Vagina (tissue), 2 donors: ENCODE measurements at regions of chr6 and their contacts with region 1.

Region 1: DNA sequence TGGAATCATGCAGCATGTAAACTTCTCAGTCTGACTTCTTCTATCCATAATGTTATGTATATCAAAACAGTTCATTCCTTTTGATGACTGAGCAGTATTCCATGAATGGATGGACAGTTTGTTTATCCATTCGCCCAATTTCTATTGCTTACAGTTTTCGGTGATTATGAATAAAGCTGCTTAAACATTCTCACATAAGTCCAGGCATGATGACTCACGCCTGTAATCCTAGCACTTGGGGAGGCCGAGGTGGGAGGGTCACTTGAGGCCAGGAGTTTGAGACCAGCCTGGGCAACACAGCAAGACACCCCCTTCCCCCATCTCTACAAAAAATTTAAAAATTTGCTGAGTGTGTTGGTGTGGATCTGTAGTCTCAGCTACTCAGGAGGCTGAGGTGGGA is 22.9 kb upstream of the HMGA1 start:
- DNase-seq: no peak
- H3K4me3 ChIP-seq: no peak overlapping the region
- H3K27ac ChIP-seq: no peak overlapping the region
- H3K4me1 ChIP-seq: no peaks in the 10 kb centered on the region
- H3K27me3 ChIP-seq: no peaks in the 10 kb centered on the region
- CTCF ChIP-seq: no peak
- POLR2A ChIP-seq: no peak

Region 2: GRCh38 chr6:34004706-34005105 is 209.1 kb before region 1 on chr6:
- intact Hi-C with region 1: no loop called
- DNase-seq: no peak
- H3K4me3 ChIP-seq: no peak overlapping the region
- H3K27ac ChIP-seq: no peak overlapping the region
- H3K4me1 ChIP-seq: no peaks in the 10 kb centered on the region
- H3K27me3 ChIP-seq: no peaks in the 10 kb centered on the region
- CTCF ChIP-seq: no peak
- POLR2A ChIP-seq: no peak

Region 3: DNA sequence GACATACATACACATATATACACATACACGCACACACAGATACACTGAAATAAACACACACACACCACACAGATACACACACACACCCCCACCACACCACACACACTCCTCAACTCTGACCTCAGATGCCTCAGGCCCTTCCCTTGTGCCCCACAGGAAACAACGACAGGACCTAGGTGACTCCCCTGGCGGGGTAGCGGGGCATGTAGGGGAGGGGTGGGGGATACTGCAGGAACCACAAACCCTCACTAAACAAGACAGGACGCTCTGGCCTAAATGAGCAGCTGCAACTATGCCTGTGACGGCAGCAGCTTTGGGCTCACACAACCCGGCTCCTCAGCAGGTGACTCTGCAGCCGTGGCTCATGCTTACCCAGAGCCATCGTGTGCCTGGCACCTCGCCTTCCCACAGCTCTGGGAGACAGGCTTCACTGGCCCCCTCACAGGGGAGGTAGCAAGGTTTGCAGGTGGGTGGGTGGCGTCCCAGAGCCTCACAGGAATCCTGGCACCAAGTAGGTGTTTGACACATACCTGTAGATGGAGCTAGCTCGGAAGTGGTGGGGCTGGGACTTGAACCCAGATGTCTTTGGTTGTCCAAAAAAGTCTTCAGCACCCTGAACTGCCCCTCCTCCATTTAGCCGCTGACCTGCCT is 168.7 kb before region 1 on chr6:
- intact Hi-C with region 1: no loop called
- DNase-seq: no peak
- H3K4me3 ChIP-seq: no peak overlapping the region
- H3K27ac ChIP-seq: no peak overlapping the region
- H3K4me1 ChIP-seq: no peaks in the 10 kb centered on the region
- H3K27me3 ChIP-seq: no peaks in the 10 kb centered on the region
- CTCF ChIP-seq: no peak
- POLR2A ChIP-seq: no peak

Region 4: DNA sequence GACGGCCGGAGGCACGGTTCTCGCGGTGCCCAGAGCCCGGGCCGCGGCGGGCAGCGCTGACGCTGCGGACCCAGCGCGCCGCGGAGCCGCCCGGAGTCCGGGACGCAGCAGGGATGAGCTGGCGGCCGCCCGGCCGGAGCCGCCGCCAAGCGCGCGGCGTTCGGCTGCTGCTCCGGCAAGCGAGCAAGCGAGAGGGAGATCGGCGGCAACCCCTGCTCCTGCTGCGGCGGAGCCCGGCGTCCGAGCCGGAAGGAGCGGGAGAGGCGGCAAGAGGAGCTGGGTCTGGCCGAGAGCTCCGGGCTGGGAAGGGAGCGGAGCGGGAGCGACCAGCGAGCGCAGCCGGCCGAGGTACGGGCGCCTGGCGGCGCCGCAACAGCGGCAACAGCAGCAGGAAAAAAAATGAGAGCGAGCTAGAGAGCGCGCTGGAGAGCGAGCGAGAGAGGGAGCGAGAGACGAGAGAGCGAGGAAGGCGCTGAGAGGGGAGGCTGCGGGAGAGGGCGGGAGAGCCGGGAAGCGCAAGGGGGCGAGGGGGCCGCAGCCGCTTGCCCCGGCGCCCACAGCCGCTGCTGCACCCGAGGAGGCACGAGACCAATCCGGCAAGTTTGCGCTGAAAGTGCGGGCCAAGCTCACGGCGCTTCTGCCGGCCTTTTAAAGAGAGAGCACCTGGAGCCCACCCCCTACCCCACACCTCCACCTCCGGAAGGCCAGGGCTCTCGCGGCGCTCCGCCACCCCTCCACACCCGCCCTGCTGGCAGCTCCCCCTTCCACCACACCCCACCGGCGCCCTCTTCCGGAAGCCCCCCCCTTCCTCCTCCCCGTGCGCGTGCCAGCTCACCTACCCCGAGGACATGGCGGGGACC is 68.4 kb before region 1 on chr6:
- intact Hi-C with region 1: loop called (anchors 2 kb)
- DNase-seq: no peak
- H3K4me3 ChIP-seq: peak overlapping the region; percentile 29 to 50
- H3K27ac ChIP-seq: no peak overlapping the region
- H3K4me1 ChIP-seq: peaks cover 25% of the 10 kb centered on the region
- H3K27me3 ChIP-seq: peaks cover 7% of the 10 kb centered on the region
- CTCF ChIP-seq: no peak
- POLR2A ChIP-seq: no peak